ENCODE measurements at regions of chr12 and their contacts with region 1.

Region 1: GRCh38 chr12:59425798-59426197 is 170.0 kb upstream of the SLC16A7 start:
- DNase-seq: no peak
- ATAC-seq: no peak
- H3K4me3 ChIP-seq: no peak overlapping the region
- H3K27ac ChIP-seq: no peak overlapping the region
- H3K4me1 ChIP-seq: no peaks in the 10 kb centered on the region
- H3K27me3 ChIP-seq: no peaks in the 10 kb centered on the region
- CTCF ChIP-seq: no peak
- POLR2A ChIP-seq: no peak

Region 2: GRCh38 chr12:60980558-60980957 is 1554.8 kb after region 1 on chr12:
- intact Hi-C with region 1: loop called in 1 of 10 experiments (anchors 10 kb)
- DNase-seq: no peak
- ATAC-seq: no peak
- H3K4me3 ChIP-seq: no peak overlapping the region
- H3K27ac ChIP-seq: no peak overlapping the region
- H3K4me1 ChIP-seq: no peaks in the 10 kb centered on the region
- H3K27me3 ChIP-seq: no peaks in the 10 kb centered on the region
- CTCF ChIP-seq: no peak
- POLR2A ChIP-seq: no peak

Measured in heart left ventricle (tissue), 16 donors.